Heart left ventricle (tissue), 16 donors: ENCODE measurements at regions of chr1 and their contacts with region 1.

Region 1: DNA sequence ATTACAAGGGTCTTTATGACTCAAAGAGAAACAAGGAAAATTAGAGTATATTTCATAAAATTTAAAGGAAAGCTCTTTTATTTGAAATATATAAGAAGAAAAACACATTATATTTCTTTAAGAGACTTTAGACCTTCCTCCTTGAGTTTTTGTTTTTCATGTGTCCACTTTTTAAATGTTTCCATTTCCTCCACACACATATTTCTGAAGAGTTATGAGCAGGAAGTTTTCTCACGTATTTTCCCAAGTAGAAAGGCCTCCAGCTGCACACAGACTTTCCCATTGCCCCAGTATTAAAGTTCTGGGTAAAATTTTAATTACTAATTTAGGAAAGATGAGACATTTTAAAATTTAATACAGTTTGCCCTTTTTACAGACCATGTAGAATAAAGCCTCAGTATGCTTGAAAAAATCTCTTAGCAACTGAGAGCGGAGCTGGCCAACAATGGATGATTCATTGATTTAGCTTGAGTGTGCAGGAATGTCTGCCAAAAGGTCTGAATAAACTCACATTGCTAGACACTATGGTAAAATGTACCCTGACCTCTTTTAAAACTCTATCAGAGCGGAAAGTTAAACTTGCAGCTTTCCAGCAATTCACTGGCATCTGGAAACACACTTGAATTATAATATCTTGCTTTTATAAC is 57.9 kb downstream of the DDAH1 start:
- DNase-seq: peak in 4 of 5 donors; percentile 28 to 42 (median 39)
- ATAC-seq: peak; percentile 57 to 91 (median 87)
- H3K4me3 ChIP-seq: peak overlapping the region in 2 of 12 donors; percentile 0 to 15
- H3K27ac ChIP-seq: peak overlapping the region in 9 of 12 donors; percentile 7 to 65 (median 55)
- H3K4me1 ChIP-seq: peaks cover 0 to 30% (median 8%) of the 10 kb centered on the region in 12 donors
- H3K27me3 ChIP-seq: no peaks in the 10 kb centered on the region
- CTCF ChIP-seq: no peak
- POLR2A ChIP-seq: no peak

Region 2: DNA sequence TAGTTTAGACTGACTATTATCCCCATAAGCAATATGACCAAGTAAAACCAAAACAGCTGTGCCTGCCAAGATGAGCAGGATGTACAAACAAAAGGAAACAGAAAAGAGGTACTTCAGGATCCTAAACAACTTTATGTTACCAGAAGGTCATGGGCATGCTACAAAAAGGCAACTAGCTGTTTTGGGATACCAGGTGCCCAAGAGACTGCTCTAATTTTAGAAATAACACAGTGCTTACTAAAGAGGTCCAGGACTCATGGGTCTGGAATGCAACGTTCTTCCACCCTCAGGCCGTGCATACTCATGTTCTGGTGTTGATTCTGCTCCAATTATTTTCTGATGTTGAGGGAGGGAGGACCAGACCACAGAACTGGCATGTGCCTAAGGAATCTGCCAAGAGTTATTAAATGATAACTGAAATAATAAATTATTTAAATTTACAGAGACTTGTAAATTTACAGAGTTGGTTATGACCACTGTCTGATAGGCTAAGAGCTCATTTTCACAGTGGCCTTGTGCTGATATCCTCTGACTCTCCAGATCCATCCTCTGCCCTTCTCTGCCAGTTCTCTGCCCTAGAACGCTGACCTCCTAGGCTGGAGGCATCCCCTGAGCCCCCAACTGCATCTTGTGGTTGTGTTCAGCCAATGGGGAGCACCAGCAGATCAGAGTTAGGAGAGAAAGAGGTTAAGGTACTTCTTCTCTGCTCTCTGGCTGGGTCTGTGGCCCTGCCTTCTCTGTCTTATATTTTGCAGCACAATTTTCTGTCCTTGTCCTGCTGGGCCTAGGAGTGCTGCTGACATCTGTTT is 92.9 kb before region 1 on chr1:
- intact Hi-C with region 1: loop called in 1 of 10 experiments (anchors 5 kb)
- DNase-seq: peak in 4 of 5 donors; percentile 44 to 51 (median 48)
- ATAC-seq: peak; percentile 91 to 94 (median 92)
- H3K4me3 ChIP-seq: no peak overlapping the region
- H3K27ac ChIP-seq: peak overlapping the region; percentile 72 to 96 (median 84)
- H3K4me1 ChIP-seq: peaks cover 0 to 47% (median 24%) of the 10 kb centered on the region in 12 donors
- H3K27me3 ChIP-seq: no peaks in the 10 kb centered on the region
- CTCF ChIP-seq: no peak
- POLR2A ChIP-seq: no peak

Region 3: DNA sequence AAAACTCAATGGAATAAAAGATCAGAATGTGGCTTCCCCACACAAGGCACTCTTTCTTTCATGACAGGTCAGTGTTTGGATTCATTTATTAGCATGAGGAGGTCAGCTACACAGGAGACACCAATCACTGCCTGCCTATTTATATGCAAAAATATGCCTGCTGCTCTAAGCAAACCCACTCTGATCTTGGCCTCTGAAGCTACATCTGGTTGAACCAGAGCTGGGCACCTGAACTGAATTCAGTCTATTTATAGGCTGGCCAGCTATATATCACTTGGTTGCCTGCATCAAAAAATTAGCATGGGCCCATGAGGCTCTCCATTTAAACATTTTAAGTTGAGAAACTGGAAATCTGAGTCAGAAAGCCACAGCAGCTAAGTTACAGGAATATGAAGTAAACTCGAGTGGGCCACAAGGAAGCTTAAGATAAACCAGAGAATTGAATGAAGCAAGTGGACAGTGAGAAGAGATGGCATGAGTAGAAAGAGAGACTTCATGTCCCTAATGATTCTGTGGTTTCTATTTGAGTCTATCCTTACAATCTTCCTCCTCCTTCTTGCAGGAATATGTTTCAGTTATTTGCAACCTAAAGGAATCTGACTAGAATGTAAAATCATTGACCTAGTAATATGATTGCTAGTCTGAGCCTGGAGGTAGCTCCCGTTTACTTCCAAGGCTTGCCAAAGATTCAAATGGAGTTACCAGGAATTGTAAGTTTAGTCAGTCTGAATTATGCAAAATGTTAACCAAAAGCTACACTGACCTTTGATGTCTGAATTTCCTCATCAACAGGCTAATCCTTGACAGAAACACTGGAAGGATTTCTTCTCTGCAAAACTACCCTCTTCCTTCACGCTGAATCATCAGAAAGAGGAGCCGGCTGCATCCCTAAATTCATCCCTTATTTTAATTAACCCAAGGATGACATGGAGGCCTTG is 40.3 kb after region 1 on chr1:
- intact Hi-C with region 1: loop called in 1 of 10 experiments (anchors 5 kb)
- DNase-seq: no peak
- ATAC-seq: peak in 2 of 4 donors; percentile 13 to 61
- H3K4me3 ChIP-seq: no peak overlapping the region
- H3K27ac ChIP-seq: peak overlapping the region in 8 of 12 donors; percentile 36 to 78 (median 62)
- H3K4me1 ChIP-seq: peaks cover 0 to 27% (median 20%) of the 10 kb centered on the region in 12 donors
- H3K27me3 ChIP-seq: no peaks in the 10 kb centered on the region
- CTCF ChIP-seq: no peak
- POLR2A ChIP-seq: no peak

Region 4: GRCh38 chr1:85464497-85465098 is 57.6 kb after region 1 on chr1:
- intact Hi-C with region 1: loop called in 2 of 10 experiments (anchors 5 kb)
- DNase-seq: peak; percentile 76 to 83 (median 79)
- ATAC-seq: peak; percentile 45 to 87 (median 86)
- H3K4me3 ChIP-seq: peak overlapping the region; percentile 3 to 79 (median 70)
- H3K27ac ChIP-seq: peak overlapping the region; percentile 3 to 83 (median 72)
- H3K4me1 ChIP-seq: peaks cover 0 to 22% (median 11%) of the 10 kb centered on the region in 12 donors
- H3K27me3 ChIP-seq: peaks cover 0 to 30% (median 0%) of the 10 kb centered on the region in 9 donors
- CTCF ChIP-seq: no peak
- POLR2A ChIP-seq: peak in 1 of 2 donors; percentile 46